HCT116 (cell line): ENCODE measurements at regions of chr6 and their contacts with region 1.

Region 1: DNA sequence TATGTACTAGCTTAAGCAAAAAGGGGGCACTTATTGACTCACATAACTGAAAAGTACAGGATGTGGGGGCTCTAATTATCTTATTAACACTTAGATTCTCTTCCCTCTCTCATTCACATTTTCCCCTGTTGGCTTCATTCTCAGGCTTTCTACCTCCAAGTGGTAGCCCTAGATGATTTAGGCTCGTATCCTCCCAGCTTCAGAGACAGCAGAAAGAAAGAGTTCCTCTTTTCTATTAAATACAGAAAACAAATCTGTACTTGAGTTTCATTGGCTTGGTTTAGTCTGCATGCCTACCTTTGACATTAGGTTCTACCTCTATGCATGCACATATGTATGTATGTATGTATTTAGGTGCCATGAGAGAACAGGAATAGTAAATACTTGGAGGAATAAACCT is 15.5 kb upstream of the E2F3 start:
- DNase-seq: no peak
- ATAC-seq: no peak
- H3K4me3 ChIP-seq: no peak overlapping the region
- H3K27ac ChIP-seq: no peak overlapping the region
- H3K4me1 ChIP-seq: no peaks in the 10 kb centered on the region
- H3K27me3 ChIP-seq: no peaks in the 10 kb centered on the region
- CTCF ChIP-seq: no peak
- POLR2A ChIP-seq: no peak
- RAD21 ChIP-seq: no peak

Region 2: GRCh38 chr6:20605581-20605980 is 219.4 kb after region 1 on chr6:
- CTCF ChIA-PET with region 1: no interaction called
- POLR2A ChIA-PET with region 1: no interaction called
- RAD21 ChIA-PET with region 1: no interaction called
- intact Hi-C with region 1: loop called (anchors 5 kb)
- DNase-seq: no peak
- ATAC-seq: no peak; the same call in 1 of the 2 replicates
- H3K4me3 ChIP-seq: no peak overlapping the region
- H3K27ac ChIP-seq: no peak overlapping the region
- H3K4me1 ChIP-seq: peaks cover 0 to 19% of the 10 kb centered on the region in 2 experiments; a peak in 2 of 4 replicates
- H3K27me3 ChIP-seq: no peaks in the 10 kb centered on the region
- CTCF ChIP-seq: no peak
- POLR2A ChIP-seq: no peak
- RAD21 ChIP-seq: no peak